IMR-90 (cell line): ENCODE measurements at regions of chr9 and their contacts with region 1.

Region 1: GRCh38 chr9:110802416-110803035 is 133.9 kb downstream of the MUSK start:
- DNase-seq: peak; percentile 65
- ATAC-seq: no peak
- H3K4me3 ChIP-seq: no peak overlapping the region
- H3K27ac ChIP-seq: peak overlapping the region; percentile 81; the same call in 1 of the 2 replicates
- H3K4me1 ChIP-seq: peaks cover 19% of the 10 kb centered on the region
- H3K27me3 ChIP-seq: no peaks in the 10 kb centered on the region
- CTCF ChIP-seq: no peak
- POLR2A ChIP-seq: no peak
- RAD21 ChIP-seq: no peak

Region 2: GRCh38 chr9:110650991-110651411 is 151.5 kb before region 1 on chr9:
- CTCF ChIA-PET with region 1: no interaction called
- POLR2A ChIA-PET with region 1: no interaction called
- dilution Hi-C with region 1: no loop called
- in situ Hi-C with region 1: no loop called
- intact Hi-C with region 1: loop called (anchors 5 kb)
- DNase-seq: peak; percentile 99
- ATAC-seq: peak; percentile 75
- H3K4me3 ChIP-seq: no peak overlapping the region
- H3K27ac ChIP-seq: peak overlapping the region; percentile 94; the same call in 1 of the 2 replicates
- H3K4me1 ChIP-seq: peaks cover 17% of the 10 kb centered on the region
- H3K27me3 ChIP-seq: no peaks in the 10 kb centered on the region
- CTCF ChIP-seq: no peak
- POLR2A ChIP-seq: no peak
- RAD21 ChIP-seq: no peak

Region 3: GRCh38 chr9:110744753-110745384 is 57.7 kb before region 1 on chr9:
- CTCF ChIA-PET with region 1: no interaction called
- POLR2A ChIA-PET with region 1: no interaction called
- dilution Hi-C with region 1: no loop called
- in situ Hi-C with region 1: no loop called
- intact Hi-C with region 1: loop called (anchors 1 kb)
- DNase-seq: peak; percentile 98
- ATAC-seq: peak; percentile 79
- H3K4me3 ChIP-seq: no peak overlapping the region
- H3K27ac ChIP-seq: peak overlapping the region; percentile 100
- H3K4me1 ChIP-seq: peaks cover 17% of the 10 kb centered on the region
- H3K27me3 ChIP-seq: no peaks in the 10 kb centered on the region
- CTCF ChIP-seq: no peak
- POLR2A ChIP-seq: no peak
- RAD21 ChIP-seq: no peak; the same call in 1 of the 2 replicates

Region 4: GRCh38 chr9:110763568-110763967 is 39.0 kb before region 1 on chr9:
- CTCF ChIA-PET with region 1: no interaction called
- POLR2A ChIA-PET with region 1: no interaction called
- dilution Hi-C with region 1: no loop called
- in situ Hi-C with region 1: no loop called
- intact Hi-C with region 1: no loop called
- DNase-seq: no peak
- ATAC-seq: no peak
- H3K4me3 ChIP-seq: no peak overlapping the region
- H3K27ac ChIP-seq: no peak overlapping the region
- H3K4me1 ChIP-seq: peaks cover 7% of the 10 kb centered on the region
- H3K27me3 ChIP-seq: no peaks in the 10 kb centered on the region
- CTCF ChIP-seq: no peak
- POLR2A ChIP-seq: no peak
- RAD21 ChIP-seq: no peak

Region 5: DNA sequence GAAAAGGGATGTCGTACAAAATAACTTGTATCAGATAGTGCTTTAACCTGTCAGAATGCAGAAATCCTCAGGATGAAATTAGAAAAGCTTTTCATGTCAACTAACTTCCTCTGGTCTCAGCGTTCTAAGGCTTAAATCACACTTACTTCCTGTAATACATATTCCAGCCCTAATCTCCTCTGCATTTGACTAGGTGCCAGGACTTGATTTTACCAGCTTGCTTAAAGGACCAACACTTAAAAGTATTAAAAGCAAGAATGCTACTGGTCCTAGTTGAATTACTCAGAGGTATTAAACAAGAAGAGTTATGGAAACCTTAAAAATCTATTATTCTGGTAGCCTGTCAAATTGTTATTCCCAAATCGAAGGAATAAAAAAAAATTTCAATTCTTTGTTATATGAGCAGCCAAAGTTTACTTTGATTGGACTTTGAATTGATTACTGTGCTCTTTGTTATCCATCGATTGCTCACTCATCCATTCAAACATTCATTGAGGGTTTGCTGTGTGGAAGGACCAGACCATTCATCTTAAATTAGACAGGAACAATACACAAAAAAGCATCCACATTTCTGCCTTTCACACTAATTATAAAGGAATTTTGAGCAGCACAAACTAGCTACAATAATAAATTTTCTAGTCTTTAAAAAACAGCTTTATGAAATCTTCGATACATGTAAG is 25.2 kb before region 1 on chr9:
- CTCF ChIA-PET with region 1: no interaction called
- POLR2A ChIA-PET with region 1: no interaction called
- dilution Hi-C with region 1: no loop called
- in situ Hi-C with region 1: no loop called
- intact Hi-C with region 1: no loop called
- DNase-seq: peak; percentile 36
- ATAC-seq: peak; percentile 29; the same call in 1 of the 2 replicates
- H3K4me3 ChIP-seq: no peak overlapping the region
- H3K27ac ChIP-seq: no peak overlapping the region; the same call in 1 of the 2 replicates
- H3K4me1 ChIP-seq: no peaks in the 10 kb centered on the region
- H3K27me3 ChIP-seq: no peaks in the 10 kb centered on the region
- CTCF ChIP-seq: no peak
- POLR2A ChIP-seq: no peak
- RAD21 ChIP-seq: no peak

Region 6: GRCh38 chr9:110835404-110835803 is 32.9 kb after region 1 on chr9:
- CTCF ChIA-PET with region 1: no interaction called
- POLR2A ChIA-PET with region 1: no interaction called
- dilution Hi-C with region 1: no loop called
- in situ Hi-C with region 1: no loop called
- intact Hi-C with region 1: loop called (anchors 5 kb)
- DNase-seq: peak; percentile 91
- ATAC-seq: peak; percentile 93
- H3K4me3 ChIP-seq: no peak overlapping the region
- H3K27ac ChIP-seq: peak overlapping the region; percentile 97; the same call in 1 of the 2 replicates
- H3K4me1 ChIP-seq: peaks cover 8% of the 10 kb centered on the region
- H3K27me3 ChIP-seq: no peaks in the 10 kb centered on the region
- CTCF ChIP-seq: no peak
- POLR2A ChIP-seq: no peak
- RAD21 ChIP-seq: no peak

Region 7: GRCh38 chr9:110919609-110920008 is 117.1 kb after region 1 on chr9:
- CTCF ChIA-PET with region 1: no interaction called
- POLR2A ChIA-PET with region 1: no interaction called
- dilution Hi-C with region 1: no loop called
- in situ Hi-C with region 1: no loop called
- intact Hi-C with region 1: loop called (anchors 5 kb)
- DNase-seq: peak; percentile 90
- ATAC-seq: peak; percentile 18
- H3K4me3 ChIP-seq: no peak overlapping the region
- H3K27ac ChIP-seq: peak overlapping the region; percentile 88
- H3K4me1 ChIP-seq: peaks cover 33% of the 10 kb centered on the region
- H3K27me3 ChIP-seq: no peaks in the 10 kb centered on the region
- CTCF ChIP-seq: no peak
- POLR2A ChIP-seq: no peak
- RAD21 ChIP-seq: peak; percentile 33; the same call in 1 of the 2 replicates